Heart left ventricle (tissue), 16 donors: ENCODE measurements at regions of chr9 and their contacts with region 1.

Region 1: DNA sequence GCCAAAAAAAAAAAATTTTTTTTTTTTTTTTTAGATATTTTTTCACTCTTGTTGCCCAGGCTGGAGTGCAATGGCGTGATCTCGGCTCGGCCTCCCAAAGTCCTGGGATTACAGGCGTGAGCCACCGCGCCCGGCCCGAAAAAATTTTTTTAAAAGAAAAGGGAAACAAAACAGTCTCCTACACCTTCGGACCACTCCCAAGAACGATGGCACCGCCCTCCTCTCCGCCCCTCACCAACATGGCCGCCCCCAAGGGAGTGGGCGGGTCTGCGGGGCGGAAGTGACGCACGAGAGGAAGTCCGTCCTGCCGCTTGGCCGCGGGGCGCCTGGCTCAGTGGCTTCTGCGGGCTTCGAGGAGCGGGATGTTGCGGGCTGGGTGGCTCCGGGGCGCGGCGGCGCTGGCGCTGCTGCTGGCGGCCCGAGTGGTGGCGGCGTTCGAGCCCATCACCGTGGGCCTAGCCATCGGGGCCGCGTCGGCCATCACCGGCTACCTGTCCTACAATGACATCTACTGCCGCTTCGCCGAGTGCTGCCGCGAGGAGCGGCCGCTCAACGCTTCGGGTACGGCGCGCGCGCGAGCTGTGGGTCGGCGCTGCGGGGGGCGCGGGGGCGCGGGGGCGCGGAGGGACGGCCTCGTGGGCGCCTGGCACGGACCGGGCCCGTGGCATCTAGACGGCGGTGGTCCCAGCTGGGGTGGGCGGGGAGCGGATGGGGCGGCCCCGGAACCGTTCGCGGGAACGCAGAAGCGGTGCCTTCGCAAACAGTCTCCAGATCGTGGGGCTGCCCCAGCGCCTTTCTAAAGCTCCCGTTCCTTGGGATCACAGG is at the start of gene TOR1B:
- DNase-seq: peak; percentile 94 to 97 (median 95)
- ATAC-seq: peak; percentile 96 to 99 (median 99)
- H3K4me3 ChIP-seq: peak within 1 kb of the TSS; percentile 72 to 98 (median 88)
- H3K27ac ChIP-seq: peak within 1 kb of the TSS; percentile 61 to 93 (median 86)
- H3K4me1 ChIP-seq: peaks cover 0 to 32% (median 8%) of the 10 kb centered on the region in 12 donors
- H3K27me3 ChIP-seq: no peaks in the 10 kb centered on the region
- CTCF ChIP-seq: no peak
- POLR2A ChIP-seq: peak in 1 of 2 donors; percentile 71
- total RNA-seq, gene TOR1B: 9.4 to 16.1 (median 13.0) TPM

Region 2: DNA sequence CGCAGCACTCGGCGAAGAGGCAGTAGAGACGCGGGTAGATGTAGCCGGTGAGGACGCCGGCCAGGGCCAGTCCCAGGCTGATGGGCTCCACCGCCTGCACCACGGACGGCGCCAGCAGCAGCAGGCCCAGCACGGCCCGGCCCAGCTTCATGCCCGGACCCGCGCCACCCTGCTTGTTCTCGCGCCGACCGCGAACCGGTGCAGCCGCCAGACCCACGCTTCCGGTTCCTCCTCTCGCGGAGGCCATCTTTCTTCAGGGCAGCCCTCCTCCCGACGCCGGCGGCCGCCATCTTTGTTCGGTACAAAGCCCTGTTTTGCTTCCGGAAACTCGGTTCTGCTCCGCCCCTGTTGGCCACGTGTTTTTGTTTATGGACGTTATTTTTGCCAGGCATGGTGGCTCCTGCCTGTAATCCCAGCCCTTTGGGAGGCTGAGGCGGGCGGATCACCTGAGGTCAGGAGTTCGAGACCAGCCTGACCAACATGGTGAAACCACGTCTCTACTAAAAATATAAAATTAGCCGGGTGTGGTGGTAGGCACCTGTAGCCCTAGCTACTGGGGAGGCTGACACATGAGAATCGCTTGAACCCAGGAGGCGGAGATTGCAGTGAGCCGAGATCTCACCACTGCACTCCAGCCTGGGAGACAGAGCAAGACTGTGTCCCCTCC is 21.0 kb after region 1 on chr9 and contains the start of gene TOR1A:
- intact Hi-C with region 1: loop called in 1 of 10 experiments (anchors 2 kb)
- DNase-seq: peak; percentile 94 to 97 (median 96)
- ATAC-seq: peak; percentile 96 to 98 (median 96)
- H3K4me3 ChIP-seq: peak within 1 kb of the TSS; percentile 50 to 99 (median 82)
- H3K27ac ChIP-seq: peak within 1 kb of the TSS in 11 of 12 donors; percentile 68 to 88 (median 76)
- H3K4me1 ChIP-seq: peaks cover 0 to 11% (median 7%) of the 10 kb centered on the region in 12 donors
- H3K27me3 ChIP-seq: no peaks in the 10 kb centered on the region
- CTCF ChIP-seq: no peak
- POLR2A ChIP-seq: peak in 1 of 2 donors; percentile 57
- total RNA-seq, gene TOR1A: 11.0 to 27.3 (median 15.7) TPM

Region 3: GRCh38 chr9:129835021-129835871 is 32.2 kb after region 1 on chr9 and contains the starts of genes C9orf78 and USP20:
- intact Hi-C with region 1: loop called in 1 of 10 experiments (anchors 1 kb)
- DNase-seq: peak; percentile 96 to 98 (median 97)
- ATAC-seq: peak; percentile 99 to 100 (median 100)
- H3K4me3 ChIP-seq: peak within 1 kb of the TSS; percentile 72 to 100 (median 88)
- H3K27ac ChIP-seq: peak within 1 kb of the TSS in 11 of 12 donors; percentile 61 to 96 (median 83)
- H3K4me1 ChIP-seq: peaks cover 0 to 42% (median 18%) of the 10 kb centered on the region in 12 donors
- H3K27me3 ChIP-seq: no peaks in the 10 kb centered on the region
- CTCF ChIP-seq: peak in 2 of 12 donors; percentile 16 to 25
- POLR2A ChIP-seq: peak; percentile 78 to 94
- total RNA-seq, gene C9orf78: 28.4 to 54.8 (median 32.5) TPM
- total RNA-seq, gene USP20: 9.5 to 19.7 (median 13.1) TPM